Dendritic cell treated with granulocyte-macrophage colony-stimulating factor and Interleukin-4, amounts not matched to agents 40 ng/mL and 50 ng/mL, for 4 days (primary cell): ENCODE measurements at regions of chr15 and their contacts with region 1.

Region 1: DNA sequence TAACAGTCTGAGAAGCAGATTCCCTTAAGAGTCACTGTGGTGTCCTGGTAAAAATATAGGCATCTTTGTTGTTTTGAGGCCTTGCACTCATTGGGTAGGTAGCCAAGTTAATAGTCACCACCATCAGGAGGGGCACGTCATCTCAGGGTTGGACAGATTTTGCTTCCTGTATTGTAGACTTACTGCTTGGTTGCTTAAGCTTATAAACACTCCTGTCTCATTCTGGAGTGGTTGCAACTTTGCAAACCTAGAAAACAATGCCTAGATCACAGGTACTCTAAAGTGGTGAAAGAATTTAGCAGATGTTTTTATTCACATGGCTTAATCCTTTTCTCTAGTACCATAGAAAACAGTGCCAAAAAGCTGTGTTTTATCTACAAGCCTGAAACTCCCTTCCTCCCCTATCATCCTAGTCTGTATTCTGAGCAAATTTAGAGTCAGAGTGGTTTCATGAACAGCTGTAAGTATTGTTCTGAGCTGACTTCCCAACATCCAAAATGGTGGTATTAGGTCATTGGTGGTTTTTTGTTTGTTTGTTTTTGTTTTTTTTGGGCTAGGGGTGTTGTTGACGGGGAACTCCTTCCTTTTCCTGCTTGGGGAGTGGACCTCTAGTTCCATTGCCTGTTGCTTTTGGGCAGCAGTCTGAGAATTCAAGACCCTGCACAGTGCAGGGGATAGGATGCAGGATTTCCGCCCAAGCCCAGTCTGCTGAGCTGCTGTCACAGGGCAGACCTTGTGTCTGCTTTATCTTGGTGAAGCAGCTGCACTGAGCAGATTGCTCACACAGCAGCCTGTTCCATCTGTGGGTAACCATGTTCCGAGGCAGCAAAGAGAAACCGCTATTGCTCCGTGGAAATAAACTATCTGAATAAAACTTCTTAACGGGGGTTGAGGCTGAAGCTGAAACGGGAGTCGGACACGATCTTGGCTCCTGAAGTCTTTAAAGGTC is 202.0 kb downstream of the AKAP13 start:
- H3K4me3 Mint-ChIP-seq: peak overlapping the region; percentile 84
- H3K27ac Mint-ChIP-seq: peak overlapping the region; percentile 93
- H3K4me1 Mint-ChIP-seq: peaks cover 72% of the 10 kb centered on the region
- H3K27me3 Mint-ChIP-seq: no peaks in the 10 kb centered on the region

Region 2: GRCh38 chr15:85494048-85494793 is 88.2 kb before region 1 on chr15:
- intact Hi-C with region 1: loop called (anchors 5 kb)
- H3K4me3 Mint-ChIP-seq: no peak overlapping the region
- H3K27ac Mint-ChIP-seq: peak overlapping the region; percentile 41
- H3K4me1 Mint-ChIP-seq: peaks cover 45% of the 10 kb centered on the region
- H3K27me3 Mint-ChIP-seq: no peaks in the 10 kb centered on the region

Region 3: DNA sequence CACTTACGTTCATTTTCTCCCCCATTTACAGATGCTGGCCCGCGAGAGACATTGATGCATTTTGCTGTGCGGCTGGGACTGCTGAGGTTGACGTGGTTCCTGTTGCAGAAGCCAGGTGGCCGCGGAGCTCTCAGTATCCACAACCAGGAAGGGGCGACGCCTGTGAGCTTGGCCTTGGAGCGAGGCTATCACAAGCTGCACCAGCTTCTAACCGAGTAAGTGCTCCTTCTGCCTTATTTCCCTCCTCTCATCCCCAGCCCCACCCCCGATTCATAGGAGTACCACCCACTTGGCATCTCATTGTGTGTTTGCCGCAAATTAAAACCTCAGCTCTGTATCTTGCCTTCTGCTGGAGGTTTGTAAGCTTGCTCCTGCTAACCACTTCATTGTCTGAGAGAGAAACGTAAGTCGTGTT is 38.7 kb before region 1 on chr15:
- intact Hi-C with region 1: loop called (anchors 2 kb)
- H3K4me3 Mint-ChIP-seq: peak overlapping the region; percentile 52
- H3K27ac Mint-ChIP-seq: peak overlapping the region; percentile 86
- H3K4me1 Mint-ChIP-seq: peaks cover 86% of the 10 kb centered on the region
- H3K27me3 Mint-ChIP-seq: no peaks in the 10 kb centered on the region

Region 4: GRCh38 chr15:85624291-85624801 is 41.9 kb after region 1 on chr15:
- intact Hi-C with region 1: loop called (anchors 5 kb)
- H3K4me3 Mint-ChIP-seq: no peak overlapping the region
- H3K27ac Mint-ChIP-seq: peak overlapping the region; percentile 48
- H3K4me1 Mint-ChIP-seq: peaks cover 61% of the 10 kb centered on the region
- H3K27me3 Mint-ChIP-seq: no peaks in the 10 kb centered on the region